ENCODE measurements at regions of chr7 and their contacts with region 1.

Region 1: GRCh38 chr7:85014936-85015660 is 171.8 kb downstream of the SEMA3D start:
- DNase-seq: no peak
- ATAC-seq: no peak
- H3K4me3 ChIP-seq: no peak overlapping the region
- H3K27ac ChIP-seq: no peak overlapping the region
- H3K4me1 ChIP-seq: no peaks in the 10 kb centered on the region
- H3K27me3 ChIP-seq: no peaks in the 10 kb centered on the region
- CTCF ChIP-seq: no peak

Region 2: DNA sequence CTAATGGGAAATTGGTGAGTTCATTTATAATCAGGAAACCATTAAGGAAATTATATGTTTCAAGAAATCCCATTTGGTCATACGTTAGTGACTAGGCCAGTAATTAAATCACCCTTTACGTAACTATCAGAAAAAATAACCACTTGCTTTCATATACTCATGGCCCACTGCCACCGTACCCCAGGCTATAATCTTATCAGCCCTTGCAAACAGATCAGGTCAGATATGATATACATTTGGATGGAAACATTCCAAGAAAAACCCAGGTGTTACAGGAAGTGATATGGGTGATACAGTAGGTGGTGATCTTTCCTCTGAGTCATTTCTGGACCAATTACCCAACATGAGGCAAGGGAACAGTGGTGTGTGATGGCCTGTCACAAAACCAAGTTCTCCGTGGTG is 339.5 kb before region 1 on chr7:
- intact Hi-C with region 1: no loop called
- DNase-seq: no peak
- ATAC-seq: no peak
- H3K4me3 ChIP-seq: no peak overlapping the region
- H3K27ac ChIP-seq: no peak overlapping the region
- H3K4me1 ChIP-seq: peaks cover 0 to 9% (median 0%) of the 10 kb centered on the region in 9 donors
- H3K27me3 ChIP-seq: no peaks in the 10 kb centered on the region
- CTCF ChIP-seq: no peak

Region 3: DNA sequence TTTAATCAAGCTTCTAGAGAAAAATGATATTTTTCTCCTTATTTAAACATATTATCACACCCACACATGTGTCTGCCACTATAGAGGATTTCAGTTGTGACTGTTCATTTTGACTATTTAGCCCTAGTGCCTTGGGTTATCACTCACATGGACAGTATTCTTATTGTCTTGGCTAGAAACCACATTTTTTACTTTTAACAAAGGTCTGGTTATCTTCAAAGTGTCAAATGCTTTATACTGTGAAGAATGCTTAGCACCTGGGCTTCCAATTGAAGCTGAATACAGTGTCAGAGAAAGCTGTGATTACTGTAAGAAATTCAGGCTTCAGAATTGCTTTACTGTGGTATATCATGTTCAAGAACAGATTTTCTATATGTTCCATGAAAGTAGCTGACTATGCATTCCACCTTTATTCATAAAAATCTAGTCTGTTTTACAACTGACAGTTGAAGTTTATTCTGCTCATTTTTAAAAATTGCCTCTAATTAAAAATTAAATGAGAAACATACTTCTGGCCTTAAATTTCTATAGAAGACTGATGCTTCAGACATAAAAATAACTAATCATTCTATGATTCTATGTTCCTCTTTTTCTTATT is 106.8 kb before region 1 on chr7:
- intact Hi-C with region 1: loop called in 2 of 10 experiments (anchors 5 to 10 kb)
- DNase-seq: no peak
- ATAC-seq: no peak
- H3K4me3 ChIP-seq: no peak overlapping the region
- H3K27ac ChIP-seq: no peak overlapping the region
- H3K4me1 ChIP-seq: peaks cover 0 to 4% (median 0%) of the 10 kb centered on the region in 9 donors
- H3K27me3 ChIP-seq: no peaks in the 10 kb centered on the region
- CTCF ChIP-seq: no peak

Region 4: DNA sequence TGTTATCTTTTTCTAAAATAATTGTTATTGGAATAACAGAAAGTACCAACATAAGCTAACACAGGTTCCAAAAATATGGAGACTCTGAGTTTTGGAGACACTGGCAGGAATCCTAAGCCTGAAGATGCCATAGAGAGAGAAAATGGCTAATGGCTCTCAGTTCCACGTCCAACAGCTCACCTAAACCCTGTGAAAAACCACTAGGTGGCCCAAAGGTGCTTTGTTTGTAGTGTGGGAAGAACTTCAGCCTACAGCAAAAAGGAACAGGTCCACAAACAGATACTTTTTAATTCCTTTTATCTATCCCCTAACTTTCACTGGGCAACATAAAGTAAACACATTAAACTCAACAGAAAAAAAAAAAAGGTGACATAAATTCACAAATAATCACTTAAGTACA is 100.5 kb before region 1 on chr7:
- intact Hi-C with region 1: loop called in 2 of 10 experiments (anchors 5 to 10 kb)
- DNase-seq: no peak
- ATAC-seq: peak in 1 of 8 donors; percentile 41
- H3K4me3 ChIP-seq: no peak overlapping the region
- H3K27ac ChIP-seq: no peak overlapping the region
- H3K4me1 ChIP-seq: no peaks in the 10 kb centered on the region
- H3K27me3 ChIP-seq: no peaks in the 10 kb centered on the region
- CTCF ChIP-seq: peak in 3 of 9 donors; percentile 4 to 16 (median 6)

Measured in heart right ventricle (tissue), 16 donors.